T-cell (primary cell): ENCODE measurements at regions of chr1 and their contacts with region 1.

Region 1: GRCh38 chr1:244272471-244273261 is 179.0 kb downstream of the ADSS2 start:
- DNase-seq: peak; percentile 35 to 89 (median 63)
- ATAC-seq: peak; percentile 78 to 88 (median 86)
- H3K4me3 ChIP-seq: no peak overlapping the region
- H3K4me3 Mint-ChIP-seq: no peak overlapping the region
- H3K27ac ChIP-seq: no peak overlapping the region
- H3K27ac Mint-ChIP-seq: no peak overlapping the region
- H3K4me1 ChIP-seq: no peaks in the 10 kb centered on the region
- H3K4me1 Mint-ChIP-seq: peaks cover 4 to 13% (median 11%) of the 10 kb centered on the region in 3 donors
- H3K27me3 ChIP-seq: no peaks in the 10 kb centered on the region
- H3K27me3 Mint-ChIP-seq: peaks cover 0 to 2% of the 10 kb centered on the region in 2 donors

Region 2: GRCh38 chr1:243343970-243344937 is 928.4 kb before region 1 on chr1:
- CTCF ChIA-PET with region 1: interaction called, 13 to 16 read pairs
- POLR2A ChIA-PET with region 1: no interaction called
- DNase-seq: peak in 2 of 35 experiments; percentile 2 to 68
- ATAC-seq: peak in 3 of 4 experiments; percentile 16 to 36 (median 34)
- H3K4me3 ChIP-seq: no peak overlapping the region
- H3K4me3 Mint-ChIP-seq: no peak overlapping the region
- H3K27ac ChIP-seq: no peak overlapping the region
- H3K27ac Mint-ChIP-seq: no peak overlapping the region
- H3K4me1 ChIP-seq: no peaks in the 10 kb centered on the region
- H3K4me1 Mint-ChIP-seq: peaks cover 0 to 2% (median 0%) of the 10 kb centered on the region in 3 donors
- H3K27me3 ChIP-seq: no peaks in the 10 kb centered on the region
- H3K27me3 Mint-ChIP-seq: no peaks in the 10 kb centered on the region

Region 3: DNA sequence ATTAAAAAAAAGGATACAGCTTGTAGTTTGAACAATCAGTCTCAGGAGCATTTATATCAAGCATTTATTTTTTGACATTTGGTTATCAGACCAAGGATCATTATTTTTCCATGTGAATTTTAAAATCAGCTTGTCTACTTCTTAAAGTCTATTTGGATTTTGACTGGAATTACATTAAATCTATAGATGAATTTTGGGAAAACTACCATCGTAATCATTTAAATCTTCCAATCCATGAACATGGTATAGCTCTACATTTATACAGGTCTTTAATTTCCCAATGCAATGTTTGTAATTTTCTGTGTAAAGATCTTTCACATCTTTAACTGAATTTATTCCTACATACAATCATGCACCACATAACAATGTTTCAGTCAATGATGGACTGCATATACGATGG is 625.8 kb before region 1 on chr1:
- CTCF ChIA-PET with region 1: no interaction called
- POLR2A ChIA-PET with region 1: interaction called in 1 of 2 experiments, 10 read pairs
- DNase-seq: no peak
- ATAC-seq: no peak
- H3K4me3 ChIP-seq: no peak overlapping the region
- H3K4me3 Mint-ChIP-seq: no peak overlapping the region
- H3K27ac ChIP-seq: no peak overlapping the region
- H3K27ac Mint-ChIP-seq: no peak overlapping the region
- H3K4me1 ChIP-seq: no peaks in the 10 kb centered on the region
- H3K4me1 Mint-ChIP-seq: no peaks in the 10 kb centered on the region
- H3K27me3 ChIP-seq: no peaks in the 10 kb centered on the region
- H3K27me3 Mint-ChIP-seq: no peaks in the 10 kb centered on the region

Region 4: DNA sequence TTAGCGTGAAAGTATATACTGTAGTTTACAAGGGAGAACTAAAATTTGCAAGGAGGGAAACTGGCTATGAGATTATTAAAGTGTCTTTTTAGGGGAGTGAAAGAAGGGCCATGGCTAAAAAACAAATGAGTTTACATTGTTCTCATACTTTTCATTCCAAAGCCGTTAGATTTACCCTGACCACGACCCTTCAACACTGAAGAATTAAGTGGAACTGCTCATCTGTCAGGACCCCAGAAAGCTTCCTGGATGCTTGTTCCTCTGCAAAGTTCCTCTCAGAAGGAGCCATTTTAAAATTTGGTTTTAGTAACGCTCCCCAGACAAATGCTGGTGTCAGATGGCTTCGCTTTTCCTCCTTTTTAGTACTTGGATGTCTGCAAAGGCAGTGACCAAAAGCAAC is 304.3 kb before region 1 on chr1:
- CTCF ChIA-PET with region 1: interaction called in 1 of 2 experiments, 10 read pairs
- POLR2A ChIA-PET with region 1: no interaction called
- DNase-seq: no peak
- ATAC-seq: no peak
- H3K4me3 ChIP-seq: no peak overlapping the region
- H3K4me3 Mint-ChIP-seq: no peak overlapping the region
- H3K27ac ChIP-seq: no peak overlapping the region
- H3K27ac Mint-ChIP-seq: no peak overlapping the region
- H3K4me1 ChIP-seq: no peaks in the 10 kb centered on the region
- H3K4me1 Mint-ChIP-seq: no peaks in the 10 kb centered on the region
- H3K27me3 ChIP-seq: no peaks in the 10 kb centered on the region
- H3K27me3 Mint-ChIP-seq: peaks cover 5 to 6% of the 10 kb centered on the region in 2 donors